Ascending aorta (tissue), 2 donors: ENCODE measurements at regions of chr21 and their contacts with region 1.

Region 1: DNA sequence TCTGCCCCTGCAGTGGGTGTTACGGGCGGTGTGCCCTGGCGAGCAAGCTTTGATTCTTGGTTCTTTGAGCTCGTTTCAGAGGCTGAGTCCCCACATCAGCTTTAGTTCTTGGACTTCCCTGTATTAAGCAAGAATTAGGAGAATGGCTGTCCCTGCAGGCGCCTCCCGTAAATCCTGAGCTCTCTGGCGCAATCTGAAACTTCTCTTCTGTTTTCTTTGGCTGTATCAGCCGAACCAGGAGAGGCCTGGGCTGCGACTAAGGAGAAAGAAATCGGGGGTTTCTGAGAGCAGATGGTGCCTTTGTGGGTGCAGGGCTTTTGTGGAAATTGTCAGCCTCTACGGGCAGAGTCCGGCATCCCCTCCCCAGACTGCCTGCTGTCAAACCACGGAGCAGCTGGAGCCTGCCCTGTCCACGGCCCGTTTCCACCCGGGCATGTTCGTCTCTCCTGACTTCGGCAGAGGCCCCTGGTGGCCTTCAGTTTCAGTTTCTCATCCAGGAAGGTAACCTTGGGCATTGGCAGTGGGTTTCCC is 17.9 kb downstream of the CSTB start:
- DNase-seq: peak in 1 of 2 donors; percentile 78
- H3K4me3 ChIP-seq: peak overlapping the region; percentile 11 to 56
- H3K27ac ChIP-seq: peak overlapping the region; percentile 71 to 81
- H3K4me1 ChIP-seq: peaks cover 9 to 15% of the 10 kb centered on the region in 2 donors
- H3K27me3 ChIP-seq: no peaks in the 10 kb centered on the region
- CTCF ChIP-seq: no peak

Region 2: DNA sequence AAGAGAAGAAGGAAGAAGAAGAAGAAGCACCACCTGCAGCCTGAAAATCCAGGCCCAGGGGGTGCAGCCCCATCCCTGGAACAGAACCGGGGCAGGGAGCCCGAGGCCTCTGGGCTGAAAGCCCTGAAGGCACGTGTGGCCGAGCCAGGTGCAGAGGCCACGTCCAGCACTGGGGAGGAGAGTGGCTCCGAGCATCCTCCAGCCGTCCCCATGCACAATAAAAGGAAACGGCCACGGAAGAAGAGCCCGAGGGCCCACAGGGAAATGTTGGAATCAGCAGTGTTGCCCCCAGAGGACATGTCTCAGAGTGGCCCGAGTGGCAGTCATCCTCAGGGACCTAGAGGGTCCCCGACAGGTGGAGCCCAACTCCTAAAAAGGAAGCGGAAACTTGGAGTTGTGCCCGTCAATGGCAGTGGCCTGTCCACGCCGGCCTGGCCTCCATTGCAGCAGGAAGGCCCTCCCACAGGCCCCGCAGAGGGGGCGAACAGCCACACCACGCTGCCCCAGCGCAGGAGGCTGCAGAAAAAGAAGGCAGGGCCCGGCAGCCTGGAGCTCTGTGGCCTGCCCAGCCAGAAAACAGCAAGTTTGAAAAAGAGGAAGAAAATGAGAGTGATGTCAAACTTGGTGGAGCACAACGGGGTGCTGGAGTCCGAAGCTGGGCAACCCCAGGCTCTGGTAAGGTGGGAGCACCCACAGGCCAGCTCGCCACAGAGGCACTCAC is 70.5 kb before region 1 on chr21:
- intact Hi-C with region 1: no loop called
- DNase-seq: no peak
- H3K4me3 ChIP-seq: no peak overlapping the region
- H3K27ac ChIP-seq: no peak overlapping the region
- H3K4me1 ChIP-seq: no peaks in the 10 kb centered on the region
- H3K27me3 ChIP-seq: no peaks in the 10 kb centered on the region
- CTCF ChIP-seq: no peak

Region 3: DNA sequence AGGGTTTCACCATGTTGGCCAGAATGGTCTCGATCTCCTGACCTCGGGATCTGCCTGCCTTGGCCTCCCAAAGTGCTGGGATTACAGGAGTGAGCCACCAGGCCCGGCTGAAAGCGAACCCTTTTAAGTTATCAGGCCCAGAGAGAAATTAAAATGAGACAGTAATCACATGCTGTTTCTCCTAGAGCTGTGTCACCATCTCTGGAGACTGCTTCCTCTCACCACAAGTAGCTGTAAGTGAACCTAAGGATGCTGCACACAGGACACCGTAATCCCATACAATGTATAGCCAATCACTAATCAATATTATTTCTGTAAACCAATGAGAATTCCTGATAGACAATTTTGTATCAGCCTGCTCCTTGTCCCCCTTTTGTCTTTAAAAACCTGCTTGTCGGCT is 23.7 kb after region 1 on chr21:
- intact Hi-C with region 1: loop called (anchors 1 kb)
- DNase-seq: no peak
- H3K4me3 ChIP-seq: no peak overlapping the region
- H3K27ac ChIP-seq: no peak overlapping the region
- H3K4me1 ChIP-seq: no peaks in the 10 kb centered on the region
- H3K27me3 ChIP-seq: no peaks in the 10 kb centered on the region
- CTCF ChIP-seq: no peak